Breast epithelium (tissue), 4 donors: ENCODE measurements at regions of chr20 and their contacts with region 1.

Region 1: DNA sequence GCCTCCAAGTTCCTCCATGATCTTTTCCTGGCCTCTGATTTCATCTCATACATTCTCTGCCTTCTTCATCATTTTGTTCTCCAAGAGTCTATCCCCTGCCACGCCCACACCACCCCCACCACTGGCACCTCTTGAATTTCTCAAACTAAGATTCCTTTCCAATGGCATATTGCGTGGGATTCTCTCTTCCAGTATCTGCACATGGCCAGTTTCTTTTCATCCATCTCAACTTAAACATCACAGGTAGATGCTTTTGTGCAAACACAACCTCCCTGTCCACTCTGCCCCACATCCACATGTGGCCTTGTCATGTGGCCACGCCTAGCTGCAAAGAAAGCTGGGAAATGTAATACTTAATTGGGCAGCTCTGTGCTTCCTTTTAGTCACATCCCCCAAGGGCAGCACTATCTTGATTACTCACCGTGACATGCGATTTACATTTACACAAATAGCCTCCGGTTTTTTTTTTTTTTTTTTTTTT is 33.4 kb upstream of the ZMYND8 start:
- DNase-seq: no peak
- H3K4me3 ChIP-seq: no peak overlapping the region
- H3K27ac ChIP-seq: no peak overlapping the region
- H3K4me1 ChIP-seq: no peaks in the 10 kb centered on the region
- H3K27me3 ChIP-seq: no peaks in the 10 kb centered on the region
- CTCF ChIP-seq: no peak
- POLR2A ChIP-seq: no peak

Region 2: GRCh38 chr20:47205577-47206498 is 184.1 kb before region 1 on chr20:
- intact Hi-C with region 1: loop called (anchors 10 kb)
- DNase-seq: no peak
- H3K4me3 ChIP-seq: no peak overlapping the region
- H3K27ac ChIP-seq: no peak overlapping the region
- H3K4me1 ChIP-seq: no peaks in the 10 kb centered on the region
- H3K27me3 ChIP-seq: no peaks in the 10 kb centered on the region
- CTCF ChIP-seq: peak; percentile 18 to 44 (median 35)
- POLR2A ChIP-seq: no peak

Region 3: DNA sequence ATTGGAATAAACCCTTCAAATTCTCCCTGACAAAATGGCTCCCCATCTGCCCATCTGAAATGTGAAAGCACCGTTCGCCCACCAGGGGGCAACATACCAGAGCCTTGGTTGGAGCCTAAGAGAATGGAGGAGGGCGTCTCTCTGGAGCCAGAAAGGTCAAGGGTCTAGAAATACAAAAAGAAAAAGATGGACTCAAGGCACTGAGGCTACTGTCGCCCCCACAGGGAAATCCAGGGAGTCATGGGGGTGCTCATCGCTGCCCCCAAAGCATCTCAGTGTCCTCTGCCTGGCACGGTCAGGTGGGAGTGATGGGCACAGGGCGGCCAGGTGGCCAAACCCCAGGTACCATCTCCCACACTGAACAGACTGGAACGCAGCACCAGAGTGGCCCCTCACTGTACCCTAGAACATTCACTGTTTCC is 169.7 kb before region 1 on chr20:
- intact Hi-C with region 1: no loop called
- DNase-seq: no peak
- H3K4me3 ChIP-seq: no peak overlapping the region
- H3K27ac ChIP-seq: no peak overlapping the region
- H3K4me1 ChIP-seq: no peaks in the 10 kb centered on the region
- H3K27me3 ChIP-seq: no peaks in the 10 kb centered on the region
- CTCF ChIP-seq: peak; percentile 24 to 46 (median 29)
- POLR2A ChIP-seq: no peak